Endothelial cell of umbilical vein (primary cell): ENCODE measurements at regions of chr3 and their contacts with region 1.

Region 1: DNA sequence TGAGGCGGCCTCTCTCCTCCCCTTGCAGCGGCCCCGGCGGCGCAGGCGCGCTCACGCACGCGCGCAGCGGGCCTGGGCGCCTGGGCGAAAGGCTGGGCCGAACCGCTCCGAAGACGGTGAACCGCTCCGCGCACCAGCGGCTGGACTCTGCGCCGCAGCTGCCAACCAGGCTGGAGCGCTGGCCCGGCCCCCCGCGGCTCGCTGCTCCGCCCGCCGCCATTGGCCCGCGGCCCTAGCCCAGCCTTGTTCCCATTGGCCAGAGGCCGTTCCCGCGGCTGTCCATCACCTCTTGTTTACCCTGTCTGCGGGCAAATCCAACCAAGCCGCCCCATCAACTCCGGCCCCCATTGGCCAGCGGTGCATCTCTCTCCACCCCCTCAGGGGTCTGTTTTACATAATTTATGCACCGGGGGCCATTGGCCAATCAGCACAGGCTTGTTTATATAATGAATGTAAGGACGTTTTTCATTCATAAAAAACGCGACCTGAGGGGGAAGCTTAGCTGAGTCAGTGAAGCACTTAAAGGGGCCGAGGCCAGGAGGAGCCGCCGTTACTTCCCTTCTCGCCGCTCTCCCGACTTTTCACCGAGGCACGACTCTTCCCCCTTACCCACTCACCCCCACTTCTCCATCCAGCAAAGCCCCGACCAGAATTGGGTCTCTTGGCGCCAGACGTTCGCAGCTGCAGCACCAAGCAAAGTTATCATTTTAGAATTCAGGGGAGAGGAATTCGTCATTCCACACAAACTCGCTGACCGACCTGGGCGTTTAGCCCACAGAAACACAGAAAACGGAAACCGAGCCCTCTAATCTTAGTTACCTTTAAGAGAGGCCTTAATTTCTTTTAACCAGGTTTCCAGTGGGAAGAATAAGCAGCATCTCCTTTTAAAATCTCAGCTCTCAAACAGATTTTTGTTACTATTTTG is at the start of gene ETV5:
- DNase-seq: peak; percentile 100
- H3K4me3 ChIP-seq: peak within 1 kb of the TSS; percentile 67 to 95 (median 87)
- H3K27ac ChIP-seq: peak within 1 kb of the TSS; percentile 88
- H3K4me1 ChIP-seq: peaks cover 18% of the 10 kb centered on the region
- H3K27me3 ChIP-seq: peaks cover 11 to 13% of the 10 kb centered on the region in 2 experiments
- CTCF ChIP-seq: no peak
- POLR2A ChIP-seq: peak; percentile 77
- total RNA-seq, gene ETV5: 40.9 and 43.4 TPM in 2 replicates

Region 2: GRCh38 chr3:185733980-185734724 is 375.1 kb before region 1 on chr3:
- CTCF ChIA-PET with region 1: no interaction called
- POLR2A ChIA-PET with region 1: no interaction called
- dilution Hi-C with region 1: no loop called
- intact Hi-C with region 1: loop called (anchors 10 kb)
- DNase-seq: peak; percentile 87
- H3K4me3 ChIP-seq: no peak overlapping the region
- H3K27ac ChIP-seq: peak overlapping the region; percentile 100
- H3K4me1 ChIP-seq: peaks cover 93% of the 10 kb centered on the region
- H3K27me3 ChIP-seq: no peaks in the 10 kb centered on the region
- CTCF ChIP-seq: peak; percentile 56 to 62
- POLR2A ChIP-seq: no peak

Region 3: GRCh38 chr3:185976977-185977678 is 132.1 kb before region 1 on chr3:
- CTCF ChIA-PET with region 1: no interaction called
- POLR2A ChIA-PET with region 1: no interaction called
- dilution Hi-C with region 1: no loop called
- intact Hi-C with region 1: loop called (anchors 2 kb)
- DNase-seq: peak; percentile 75
- H3K4me3 ChIP-seq: no peak overlapping the region
- H3K27ac ChIP-seq: no peak overlapping the region
- H3K4me1 ChIP-seq: peaks cover 6% of the 10 kb centered on the region
- H3K27me3 ChIP-seq: no peaks in the 10 kb centered on the region
- CTCF ChIP-seq: peak; percentile 85 to 93
- POLR2A ChIP-seq: no peak

Region 4: GRCh38 chr3:186060222-186060621 is 49.0 kb before region 1 on chr3:
- CTCF ChIA-PET with region 1: no interaction called
- POLR2A ChIA-PET with region 1: no interaction called
- dilution Hi-C with region 1: no loop called
- intact Hi-C with region 1: no loop called
- DNase-seq: no peak
- H3K4me3 ChIP-seq: no peak overlapping the region
- H3K27ac ChIP-seq: no peak overlapping the region
- H3K4me1 ChIP-seq: no peaks in the 10 kb centered on the region
- H3K27me3 ChIP-seq: no peaks in the 10 kb centered on the region
- CTCF ChIP-seq: no peak
- POLR2A ChIP-seq: no peak

Region 5: DNA sequence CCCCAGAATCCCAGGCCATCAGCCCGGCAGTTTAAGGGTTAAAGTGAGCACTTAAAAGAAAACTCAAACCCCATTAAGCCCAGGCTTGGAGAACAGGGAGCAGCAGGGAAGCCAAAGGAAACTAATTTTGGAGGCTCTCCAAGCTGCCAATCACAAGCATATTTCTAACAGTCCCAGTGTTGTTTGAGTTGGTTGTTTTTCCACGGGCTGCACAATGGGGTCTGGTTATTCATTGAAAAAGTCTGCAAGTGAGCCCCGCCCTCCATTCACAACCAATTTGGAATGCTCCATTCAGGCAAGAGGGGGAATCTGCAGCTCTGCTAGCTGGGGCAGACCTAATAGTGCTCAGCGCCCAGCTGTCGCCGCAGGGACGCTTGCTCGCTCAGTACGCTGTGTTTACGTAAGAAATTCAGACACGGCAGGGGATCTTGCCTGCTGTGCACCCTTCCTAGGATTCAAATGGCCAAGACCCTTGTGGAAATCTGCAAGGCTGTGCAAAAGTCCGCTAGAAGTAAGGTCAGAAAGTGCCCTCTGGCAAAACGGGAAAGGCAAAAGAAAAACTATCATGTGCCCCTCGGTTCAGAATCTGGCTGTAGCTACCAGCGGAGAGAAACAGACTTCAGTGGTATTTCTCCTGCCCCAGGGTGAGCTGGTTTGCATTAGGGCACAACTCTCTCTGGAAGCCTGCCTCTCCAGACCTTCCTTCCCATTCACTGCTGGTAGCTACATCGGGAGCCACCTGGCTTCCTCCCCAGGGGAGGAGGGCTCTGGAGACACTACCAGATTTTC is 11.3 kb before region 1 on chr3:
- CTCF ChIA-PET with region 1: interaction called, 8 read pairs
- POLR2A ChIA-PET with region 1: interaction called, 15 read pairs
- dilution Hi-C with region 1: no loop called
- intact Hi-C with region 1: loop called (anchors 1 kb)
- DNase-seq: peak; percentile 96
- H3K4me3 ChIP-seq: peak overlapping the region in 2 of 3 experiments; percentile 36 to 58
- H3K27ac ChIP-seq: no peak overlapping the region
- H3K4me1 ChIP-seq: peaks cover 13% of the 10 kb centered on the region
- H3K27me3 ChIP-seq: no peaks in the 10 kb centered on the region
- CTCF ChIP-seq: no peak
- POLR2A ChIP-seq: no peak

Region 6: GRCh38 chr3:186540221-186540834 is 431.1 kb after region 1 on chr3:
- CTCF ChIA-PET with region 1: interaction called, 13 read pairs
- POLR2A ChIA-PET with region 1: no interaction called
- dilution Hi-C with region 1: no loop called
- intact Hi-C with region 1: loop called (anchors 5 kb)
- DNase-seq: peak; percentile 82
- H3K4me3 ChIP-seq: no peak overlapping the region
- H3K27ac ChIP-seq: peak overlapping the region; percentile 46
- H3K4me1 ChIP-seq: peaks cover 20% of the 10 kb centered on the region
- H3K27me3 ChIP-seq: no peaks in the 10 kb centered on the region
- CTCF ChIP-seq: peak; percentile 43 to 66
- POLR2A ChIP-seq: no peak

Region 7: DNA sequence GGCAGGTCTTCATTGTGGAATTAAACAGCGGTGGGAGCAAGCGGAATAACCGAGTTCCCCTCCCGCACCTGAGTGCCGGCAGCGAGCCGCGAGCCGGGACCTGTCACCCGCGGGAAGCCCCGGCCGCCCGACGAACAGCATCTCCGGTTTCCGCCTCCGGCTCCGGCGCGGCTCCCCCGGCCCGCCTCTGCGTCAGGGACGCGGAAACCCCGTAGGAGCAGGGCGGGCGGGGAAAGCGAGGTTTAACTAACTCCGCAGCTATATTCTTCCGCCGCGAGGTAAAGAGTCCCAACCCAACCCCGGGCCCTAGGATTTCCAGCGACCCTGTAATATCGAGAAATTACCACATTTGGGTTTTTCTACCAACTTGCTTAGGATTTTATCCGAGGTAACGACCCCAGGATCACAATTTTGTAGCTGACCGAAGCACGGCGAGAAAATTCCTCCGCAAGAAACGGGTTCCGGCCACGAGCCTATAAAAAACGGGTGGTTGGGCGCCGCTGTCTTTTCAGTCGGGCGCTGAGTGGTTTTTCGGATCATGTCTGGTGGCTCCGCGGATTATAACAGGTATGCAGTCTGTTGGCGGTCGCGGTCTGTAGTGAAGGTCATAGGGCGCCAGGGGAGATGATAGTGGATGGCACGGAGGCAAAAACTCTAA is 674.0 kb after region 1 on chr3 and contains the start of gene EIF4A2:
- CTCF ChIA-PET with region 1: no interaction called
- POLR2A ChIA-PET with region 1: interaction called, 3 read pairs
- dilution Hi-C with region 1: no loop called
- intact Hi-C with region 1: loop called (anchors 5 kb)
- DNase-seq: peak; percentile 86
- H3K4me3 ChIP-seq: peak within 1 kb of the TSS; percentile 38 to 85 (median 72)
- H3K27ac ChIP-seq: peak within 1 kb of the TSS; percentile 93
- H3K4me1 ChIP-seq: peaks cover 26% of the 10 kb centered on the region
- H3K27me3 ChIP-seq: no peaks in the 10 kb centered on the region
- CTCF ChIP-seq: no peak
- POLR2A ChIP-seq: peak; percentile 99
- total RNA-seq, gene EIF4A2: 260 and 282 TPM in 2 replicates

Region 8: DNA sequence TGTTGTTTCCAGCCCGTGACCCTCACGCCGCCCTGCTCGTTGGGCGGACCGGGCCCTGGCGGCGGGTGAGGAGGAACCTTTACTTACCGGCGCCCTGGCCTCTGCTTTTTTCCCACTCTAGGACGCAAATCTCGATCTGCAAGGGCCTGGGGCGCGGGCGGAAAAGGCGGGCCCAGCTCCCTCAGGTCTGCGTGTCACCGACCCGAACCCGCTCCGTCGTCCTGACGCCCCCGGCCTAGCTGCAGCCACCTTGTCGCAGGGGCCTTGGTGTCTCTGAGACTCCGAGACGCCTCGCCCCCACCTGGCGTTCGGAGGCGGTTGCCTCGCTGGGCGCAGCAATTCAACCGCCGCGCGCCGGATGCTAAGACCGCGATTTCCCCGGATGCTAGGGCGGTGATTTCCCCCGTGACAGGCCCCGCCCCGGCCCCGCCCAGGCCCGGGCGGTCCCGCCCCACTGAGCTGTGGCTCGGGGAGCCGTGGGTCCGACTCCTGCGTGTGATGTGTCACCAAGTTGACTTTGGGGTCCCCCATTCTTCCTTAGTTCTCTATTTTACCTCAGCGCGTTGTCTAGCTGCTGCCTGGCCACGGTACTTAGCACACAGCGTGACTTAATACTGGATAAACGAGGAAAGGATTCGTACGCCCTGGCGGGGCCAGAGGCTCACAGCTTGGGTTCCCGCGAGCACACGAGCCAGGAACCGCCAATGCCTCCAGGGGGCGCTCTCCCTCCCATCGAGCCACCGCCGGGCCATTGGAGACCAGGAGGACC is 1030.1 kb after region 1 on chr3 and contains the start of gene RPL39L:
- CTCF ChIA-PET with region 1: no interaction called
- POLR2A ChIA-PET with region 1: no interaction called
- dilution Hi-C with region 1: no loop called
- intact Hi-C with region 1: loop called (anchors 5 kb)
- DNase-seq: peak; percentile 87
- H3K4me3 ChIP-seq: peak within 1 kb of the TSS; percentile 44 to 67 (median 54)
- H3K27ac ChIP-seq: peak within 1 kb of the TSS; percentile 55
- H3K4me1 ChIP-seq: peaks cover 4% of the 10 kb centered on the region
- H3K27me3 ChIP-seq: peaks cover 0 to 6% of the 10 kb centered on the region in 2 experiments
- CTCF ChIP-seq: peak; percentile 95 to 97
- POLR2A ChIP-seq: peak; percentile 83
- total RNA-seq, gene RPL39L: 16.8 and 22.3 TPM in 2 replicates